AG04449 (cell line): ENCODE measurements at regions of chr12 and their contacts with region 1.

Region 1: GRCh38 chr12:120265473-120266179 is at the start of gene PXN:
- DNase-seq: no peak
- H3K4me3 ChIP-seq: peak within 1 kb of the TSS; percentile 81
- CTCF ChIP-seq: peak; percentile 88

Region 2: GRCh38 chr12:120276734-120277133 is 11.1 kb after region 1 on chr12:
- CTCF ChIA-PET with region 1: interaction called, 16 read pairs
- POLR2A ChIA-PET with region 1: no interaction called
- DNase-seq: no peak
- H3K4me3 ChIP-seq: no peak overlapping the region
- CTCF ChIP-seq: no peak

Region 3: GRCh38 chr12:120286796-120287465 is 21.3 kb after region 1 on chr12:
- CTCF ChIA-PET with region 1: interaction called, 23 read pairs
- POLR2A ChIA-PET with region 1: interaction called, 34 read pairs
- DNase-seq: no peak
- H3K4me3 ChIP-seq: no peak overlapping the region
- CTCF ChIP-seq: no peak

Region 4: GRCh38 chr12:120686690-120687577 is 421.3 kb after region 1 on chr12 and contains the start of gene MLEC:
- CTCF ChIA-PET with region 1: no interaction called
- POLR2A ChIA-PET with region 1: no interaction called
- DNase-seq: peak; percentile 79
- H3K4me3 ChIP-seq: peak within 1 kb of the TSS; percentile 92
- CTCF ChIP-seq: peak; percentile 20